Activated CD8-positive, alpha-beta memory T cell treated with anti-CD3 and anti-CD28 coated beads, Interleukin-2, amount 10 ng/mL, durations not matched to agents 7 days and 5 days (primary cell): ENCODE measurements at regions of chr1 and their contacts with region 1.

Region 1: DNA sequence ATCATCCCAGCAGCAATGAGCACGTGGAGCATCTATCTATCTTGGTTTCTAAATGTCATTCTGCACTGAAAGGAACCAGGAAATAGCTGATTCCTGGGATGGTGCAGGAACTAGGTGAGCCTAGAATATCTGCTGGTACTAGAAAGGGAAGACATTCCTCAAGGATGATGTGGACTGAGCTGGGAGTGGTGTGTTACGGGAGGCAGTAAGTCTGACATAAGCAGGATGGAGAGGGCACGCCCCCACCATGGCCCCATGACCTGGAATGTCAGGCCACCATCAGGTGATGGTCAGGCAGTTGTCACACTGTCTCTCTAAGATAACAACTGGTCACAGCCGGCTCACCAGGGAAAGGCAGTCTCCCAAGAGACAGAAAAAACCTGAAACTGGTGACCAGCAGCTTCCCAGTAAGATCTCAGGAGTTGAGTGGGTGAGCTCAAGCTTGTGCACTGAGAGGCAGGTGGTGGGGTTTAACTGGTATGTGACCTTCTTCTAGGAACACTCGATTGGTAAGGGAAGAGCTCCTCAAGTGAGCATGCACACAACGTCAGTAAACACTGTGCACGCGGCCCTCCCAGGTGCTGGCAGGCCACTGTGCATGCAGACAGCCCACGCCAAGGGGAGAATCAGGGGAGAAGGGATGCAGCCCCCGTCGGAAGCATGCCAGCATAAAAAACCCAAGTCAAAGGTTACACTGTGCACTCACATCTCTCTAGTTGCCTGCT is 148.7 kb downstream of the ADSS2 start:
- DNase-seq: no peak
- ATAC-seq: no peak
- H3K4me3 Mint-ChIP-seq: no peak overlapping the region
- H3K27ac Mint-ChIP-seq: no peak overlapping the region
- H3K4me1 Mint-ChIP-seq: peaks cover 13% of the 10 kb centered on the region
- H3K27me3 Mint-ChIP-seq: peaks cover 3% of the 10 kb centered on the region

Region 2: GRCh38 chr1:244272471-244273261 is 30.4 kb before region 1 on chr1:
- CTCF ChIA-PET with region 1: interaction called, 11 read pairs
- DNase-seq: peak; percentile 79
- ATAC-seq: peak; percentile 86
- H3K4me3 Mint-ChIP-seq: no peak overlapping the region
- H3K27ac Mint-ChIP-seq: peak overlapping the region; percentile 39
- H3K4me1 Mint-ChIP-seq: peaks cover 14% of the 10 kb centered on the region
- H3K27me3 Mint-ChIP-seq: peaks cover 3% of the 10 kb centered on the region

Region 3: DNA sequence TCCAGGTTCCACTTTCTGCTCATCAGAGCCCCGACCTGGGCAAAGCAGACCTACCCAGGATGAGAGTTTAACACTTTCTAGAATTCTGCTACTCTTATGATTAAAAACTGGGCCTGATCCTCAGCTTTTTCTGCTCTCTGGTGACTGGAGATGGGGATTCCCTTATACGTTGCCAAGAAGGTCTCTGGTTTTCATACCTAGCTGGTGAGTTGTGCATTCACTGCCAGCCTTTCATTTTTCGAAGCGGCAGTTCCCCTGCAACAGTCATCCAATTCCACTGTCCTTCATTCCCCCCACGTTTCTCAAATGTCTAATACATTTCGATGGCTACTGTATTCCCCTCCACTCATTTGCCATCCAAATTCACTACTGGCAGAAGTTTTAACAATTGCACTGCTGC is 13.4 kb after region 1 on chr1:
- CTCF ChIA-PET with region 1: interaction called, 10 read pairs
- DNase-seq: no peak
- ATAC-seq: no peak
- H3K4me3 Mint-ChIP-seq: no peak overlapping the region
- H3K27ac Mint-ChIP-seq: no peak overlapping the region
- H3K4me1 Mint-ChIP-seq: peaks cover 35% of the 10 kb centered on the region
- H3K27me3 Mint-ChIP-seq: no peaks in the 10 kb centered on the region

Region 4: DNA sequence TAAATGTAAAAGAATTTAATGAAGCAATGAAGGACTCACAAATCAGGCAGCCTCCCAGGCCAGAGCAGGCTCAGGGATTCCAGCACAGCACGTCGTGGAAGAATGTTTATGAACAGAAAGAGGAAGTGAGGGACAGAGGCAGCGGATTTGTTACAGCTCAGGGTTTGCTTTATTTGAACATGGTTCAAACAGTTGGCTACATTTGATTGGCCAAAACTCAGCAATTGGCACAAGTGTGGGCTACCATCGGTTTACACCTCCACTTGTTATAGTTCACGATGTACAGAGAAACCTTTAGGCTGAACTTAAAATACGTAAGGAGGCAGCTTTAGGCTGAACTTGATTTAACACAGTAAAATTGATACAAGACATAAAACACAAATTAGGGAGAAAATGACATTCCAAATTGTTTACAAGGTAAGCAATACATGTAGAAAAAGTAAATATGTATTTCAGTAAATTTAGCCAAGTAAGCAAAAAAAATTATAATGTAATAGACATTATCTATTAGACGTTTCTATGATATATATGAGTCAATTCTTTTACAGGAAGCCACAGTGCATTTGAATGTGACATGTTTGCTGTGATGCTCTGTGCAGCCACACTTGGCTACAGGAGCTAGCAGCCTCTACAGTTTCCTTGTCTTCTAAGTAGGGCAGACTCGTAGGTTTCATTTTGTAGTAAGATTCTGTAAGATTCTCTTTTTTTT is 22.2 kb after region 1 on chr1:
- CTCF ChIA-PET with region 1: interaction called, 16 read pairs
- DNase-seq: peak; percentile 79
- ATAC-seq: peak; percentile 84
- H3K4me3 Mint-ChIP-seq: peak overlapping the region; percentile 71
- H3K27ac Mint-ChIP-seq: peak overlapping the region; percentile 93
- H3K4me1 Mint-ChIP-seq: peaks cover 60% of the 10 kb centered on the region
- H3K27me3 Mint-ChIP-seq: no peaks in the 10 kb centered on the region

Region 5: DNA sequence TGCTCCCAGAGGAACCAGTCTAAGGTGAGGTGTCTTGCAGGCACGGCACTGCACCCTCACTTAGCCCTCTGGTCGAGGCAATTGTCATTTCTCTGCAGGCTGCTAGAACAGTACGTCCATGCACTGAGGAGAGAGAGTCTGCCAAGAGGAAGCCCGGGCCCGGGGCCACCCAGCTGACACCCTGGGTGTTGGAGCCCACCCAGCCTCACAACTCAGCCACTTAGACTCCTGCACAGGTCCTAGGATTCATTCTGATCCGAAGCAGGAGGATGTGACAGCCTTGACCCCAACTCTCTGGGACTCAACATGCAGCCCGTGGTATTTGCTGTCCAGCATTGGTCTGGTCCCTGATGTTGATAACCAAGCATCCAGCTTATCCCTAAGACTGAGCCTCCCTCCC is 36.7 kb after region 1 on chr1:
- CTCF ChIA-PET with region 1: no interaction called
- DNase-seq: peak; percentile 30
- ATAC-seq: no peak
- H3K4me3 Mint-ChIP-seq: no peak overlapping the region
- H3K27ac Mint-ChIP-seq: no peak overlapping the region
- H3K4me1 Mint-ChIP-seq: peaks cover 19% of the 10 kb centered on the region
- H3K27me3 Mint-ChIP-seq: peaks cover 2% of the 10 kb centered on the region

Region 6: GRCh38 chr1:244391761-244392160 is 88.7 kb after region 1 on chr1:
- CTCF ChIA-PET with region 1: no interaction called
- DNase-seq: no peak
- ATAC-seq: no peak
- H3K4me3 Mint-ChIP-seq: no peak overlapping the region
- H3K27ac Mint-ChIP-seq: no peak overlapping the region
- H3K4me1 Mint-ChIP-seq: peaks cover 8% of the 10 kb centered on the region
- H3K27me3 Mint-ChIP-seq: no peaks in the 10 kb centered on the region